ENCODE measurements at regions of chr5 and their contacts with region 1.

Region 1: DNA sequence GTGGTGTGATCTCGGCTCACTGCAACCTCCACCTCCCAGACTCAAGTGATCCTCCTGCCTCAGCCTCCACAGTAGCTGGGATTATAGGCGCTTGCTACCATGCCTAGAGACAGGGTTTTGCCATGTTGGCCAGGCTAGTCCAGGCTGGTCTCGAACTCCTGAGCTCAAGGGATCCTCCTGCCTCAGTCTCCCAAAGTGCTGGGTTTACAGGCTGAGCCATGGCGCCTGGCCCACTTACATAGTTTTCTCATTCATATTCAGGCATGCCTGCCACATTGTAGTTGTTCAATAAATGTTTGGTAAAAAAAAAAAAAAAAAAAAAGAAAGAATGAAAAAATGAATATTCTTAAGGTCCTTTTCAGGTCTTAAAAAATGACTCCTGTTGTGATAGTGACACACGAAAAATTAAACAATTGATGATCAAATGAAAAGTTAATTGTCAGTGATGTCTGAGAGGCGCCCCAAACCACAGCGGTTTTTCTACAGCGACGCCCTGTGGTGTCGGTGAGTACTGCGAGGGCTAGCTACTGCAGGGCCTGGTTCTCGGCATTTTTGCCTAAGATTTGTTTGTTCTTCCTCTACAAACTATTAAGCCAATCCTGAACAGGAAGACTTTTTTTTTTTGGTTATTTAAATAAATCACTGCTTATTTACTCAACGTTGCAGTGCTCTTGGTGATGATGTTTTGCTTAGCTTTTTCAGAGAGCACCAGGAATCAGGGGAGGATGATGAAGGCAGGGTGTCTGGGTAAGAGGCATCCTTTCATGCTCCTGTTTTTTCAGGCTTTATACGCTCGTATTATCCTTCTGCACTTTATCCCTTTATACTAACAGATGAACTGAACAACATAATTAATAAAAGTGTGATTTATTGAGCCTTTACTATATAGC is 67.0 kb upstream of the DPYSL3 start:
- DNase-seq: peak; percentile 29
- ATAC-seq: peak; percentile 88
- H3K4me3 ChIP-seq: no peak overlapping the region
- H3K27ac ChIP-seq: no peak overlapping the region
- H3K4me1 ChIP-seq: peaks cover 2% of the 10 kb centered on the region; the same call in 1 of the 2 replicates
- H3K27me3 ChIP-seq: no peaks in the 10 kb centered on the region
- CTCF ChIP-seq: peak; percentile 80
- POLR2A ChIP-seq: no peak
- RAD21 ChIP-seq: peak; percentile 71

Region 2: DNA sequence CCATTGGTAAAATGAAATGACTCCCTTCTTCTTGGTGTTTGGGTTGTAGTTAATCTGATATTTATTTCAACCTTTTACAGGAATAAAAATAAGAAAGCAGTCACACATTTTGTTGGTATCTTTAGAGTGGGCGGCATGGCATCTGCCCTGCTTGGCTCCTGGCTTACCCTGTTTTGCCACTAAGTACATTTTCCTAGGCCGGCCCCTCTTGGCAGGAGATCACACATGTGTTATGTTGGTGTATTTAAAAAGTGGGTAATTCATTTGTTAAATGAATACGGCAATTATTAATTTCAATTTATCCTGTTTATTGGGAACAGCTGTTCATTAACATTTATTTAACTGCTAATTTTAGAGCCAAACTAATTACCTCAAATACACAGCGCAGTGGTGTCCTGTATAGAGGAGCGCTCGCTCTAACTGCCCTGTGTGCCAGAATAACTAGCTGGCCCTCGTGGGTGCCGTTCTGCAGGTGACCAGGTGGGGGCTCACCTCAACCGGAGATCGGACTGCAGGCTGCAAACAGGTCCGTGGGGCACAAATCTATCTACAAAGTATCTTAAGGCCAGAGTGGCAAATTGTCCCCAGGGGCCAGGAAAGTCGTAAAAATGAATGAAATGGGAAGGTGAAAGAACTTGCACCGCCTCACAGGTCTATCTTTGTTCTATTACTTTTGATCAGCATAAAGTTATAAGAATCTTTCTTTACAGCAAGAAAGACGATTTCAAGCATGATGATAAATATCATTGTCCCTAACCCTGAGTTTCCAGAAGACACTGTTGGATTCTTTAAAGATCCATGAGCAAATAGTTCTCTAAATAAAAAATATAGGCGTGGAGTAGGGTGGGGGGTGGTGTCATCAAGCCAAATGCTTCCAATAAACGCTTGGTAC is 1034.7 kb before region 1 on chr5:
- CTCF ChIA-PET with region 1: interaction called, 3 read pairs
- POLR2A ChIA-PET with region 1: no interaction called
- dilution Hi-C with region 1: no loop called
- in situ Hi-C with region 1: loop called (anchors 25 kb)
- intact Hi-C with region 1: loop called (anchors 10 kb)
- DNase-seq: peak; percentile 47
- ATAC-seq: peak; percentile 95
- H3K4me3 ChIP-seq: no peak overlapping the region
- H3K27ac ChIP-seq: no peak overlapping the region
- H3K4me1 ChIP-seq: no peaks in the 10 kb centered on the region
- H3K27me3 ChIP-seq: peaks cover 7% of the 10 kb centered on the region
- CTCF ChIP-seq: peak; percentile 76
- POLR2A ChIP-seq: no peak
- RAD21 ChIP-seq: peak; percentile 76

Region 3: DNA sequence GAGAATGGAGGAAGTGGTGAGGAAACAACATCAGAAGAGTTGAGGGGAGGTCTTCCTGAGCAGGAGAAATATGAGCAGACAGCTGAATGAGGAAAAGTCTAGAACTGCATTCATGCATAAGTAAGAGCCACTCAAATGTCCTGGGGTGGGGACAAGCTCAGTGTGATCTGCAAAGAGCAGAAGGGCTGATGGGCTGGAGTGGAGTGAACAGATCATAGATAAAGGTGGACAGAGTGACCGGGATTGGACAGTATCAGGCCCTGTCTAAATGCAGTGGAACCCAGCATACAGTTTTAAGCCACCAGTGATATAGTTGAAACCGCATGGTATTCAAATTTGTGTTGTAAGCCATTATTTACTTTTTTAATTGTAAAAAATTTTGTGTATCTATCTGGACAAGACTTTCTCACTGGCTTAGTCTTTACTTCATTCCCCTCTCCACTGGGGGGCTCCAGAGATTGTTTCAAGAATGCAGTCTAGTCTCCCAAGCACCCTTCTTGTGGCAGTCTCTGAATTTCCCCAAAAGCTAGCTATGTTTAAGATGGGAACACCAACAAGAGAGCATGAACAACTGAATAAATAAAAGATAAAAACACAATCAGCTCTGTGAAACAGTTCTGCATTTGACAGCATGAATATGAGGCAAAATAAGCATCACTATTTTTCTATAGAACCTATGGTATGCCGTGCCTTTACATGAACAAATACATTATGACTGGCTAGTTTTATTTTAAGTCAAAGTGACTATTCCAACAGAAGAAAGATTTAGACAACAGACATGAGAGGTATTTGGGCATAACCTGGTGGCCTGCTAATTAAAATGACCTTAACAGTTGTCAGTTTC is 352.7 kb before region 1 on chr5:
- CTCF ChIA-PET with region 1: interaction called, 26 read pairs
- POLR2A ChIA-PET with region 1: no interaction called
- dilution Hi-C with region 1: no loop called
- in situ Hi-C with region 1: loop called (anchors 10 kb)
- intact Hi-C with region 1: loop called (anchors 1 kb)
- DNase-seq: peak; percentile 42
- ATAC-seq: peak; percentile 84; the same call in 1 of the 2 replicates
- H3K4me3 ChIP-seq: no peak overlapping the region
- H3K27ac ChIP-seq: no peak overlapping the region
- H3K4me1 ChIP-seq: no peaks in the 10 kb centered on the region
- H3K27me3 ChIP-seq: no peaks in the 10 kb centered on the region; the same call in 1 of the 2 replicates
- CTCF ChIP-seq: peak; percentile 75
- POLR2A ChIP-seq: no peak
- RAD21 ChIP-seq: peak; percentile 84

Region 4: GRCh38 chr5:147453875-147454814 is 122.7 kb before region 1 on chr5:
- CTCF ChIA-PET with region 1: interaction called, 7 read pairs
- POLR2A ChIA-PET with region 1: no interaction called
- dilution Hi-C with region 1: no loop called
- in situ Hi-C with region 1: no loop called
- intact Hi-C with region 1: loop called (anchors 1 kb)
- DNase-seq: peak; percentile 85
- ATAC-seq: peak; percentile 89
- H3K4me3 ChIP-seq: peak overlapping the region; percentile 96
- H3K27ac ChIP-seq: peak overlapping the region; percentile 82
- H3K4me1 ChIP-seq: peaks cover 8% of the 10 kb centered on the region
- H3K27me3 ChIP-seq: no peaks in the 10 kb centered on the region; the same call in 1 of the 2 replicates
- CTCF ChIP-seq: peak; percentile 96
- POLR2A ChIP-seq: 0 out of 2 replicates have a peak, but pooled peaks have one; percentile 5
- RAD21 ChIP-seq: peak; percentile 84

Region 5: DNA sequence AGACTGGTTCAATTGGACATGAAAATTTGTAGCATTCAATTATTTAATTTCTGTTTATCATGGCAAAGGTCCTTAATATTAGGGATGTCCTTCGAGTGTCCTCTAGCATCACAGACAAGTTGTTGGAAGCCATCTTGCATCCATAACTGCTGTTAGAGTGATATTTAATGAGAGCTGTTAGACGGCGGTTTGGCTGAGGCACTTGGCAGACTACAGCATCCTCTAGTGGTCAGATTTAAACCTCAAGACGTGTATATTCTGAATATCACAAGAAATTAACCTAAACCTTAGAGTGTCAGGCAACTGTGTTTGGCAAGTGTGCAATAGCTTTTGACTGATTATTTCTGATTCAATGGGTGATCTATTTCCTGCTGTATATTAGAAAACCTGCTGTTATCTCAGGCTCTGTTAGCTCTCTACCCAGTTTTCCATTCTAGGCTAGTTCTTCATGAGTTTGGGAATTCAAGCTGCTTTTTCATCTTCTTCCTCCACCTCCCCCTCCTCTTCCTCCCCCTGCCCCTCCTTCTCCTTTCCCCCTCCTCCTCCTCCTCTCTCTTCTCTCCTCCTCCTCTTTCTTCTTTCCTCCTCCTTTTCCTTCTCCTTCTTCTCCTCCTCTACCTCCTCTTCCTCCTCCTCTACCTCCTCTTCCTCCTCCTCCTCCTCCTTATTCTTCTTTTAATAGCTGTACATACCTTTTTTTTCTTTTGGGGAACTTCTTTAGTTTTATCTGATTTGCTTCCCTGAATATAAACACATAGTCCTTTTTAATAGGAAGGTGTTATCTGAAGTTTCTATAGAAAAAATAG is 246.0 kb after region 1 on chr5:
- CTCF ChIA-PET with region 1: interaction called, 3 read pairs
- POLR2A ChIA-PET with region 1: no interaction called
- dilution Hi-C with region 1: no loop called
- in situ Hi-C with region 1: no loop called
- intact Hi-C with region 1: loop called (anchors 1 kb)
- DNase-seq: peak; percentile 61
- ATAC-seq: peak; percentile 85
- H3K4me3 ChIP-seq: no peak overlapping the region
- H3K27ac ChIP-seq: no peak overlapping the region
- H3K4me1 ChIP-seq: no peaks in the 10 kb centered on the region
- H3K27me3 ChIP-seq: no peaks in the 10 kb centered on the region
- CTCF ChIP-seq: peak; percentile 93
- POLR2A ChIP-seq: 0 out of 2 replicates have a peak, but pooled peaks have one; percentile 20
- RAD21 ChIP-seq: peak; percentile 89

Measured in IMR-90 (cell line).